ENCODE measurements at regions of chr2 and their contacts with region 1.

Region 1: GRCh38 chr2:173101687-173102086 is 26.0 kb downstream of the MAP3K20 start:
- DNase-seq: no peak
- ATAC-seq: peak; percentile 62 to 94 (median 90)
- H3K4me3 ChIP-seq: no peak overlapping the region
- H3K27ac ChIP-seq: peak overlapping the region; percentile 48
- H3K4me1 ChIP-seq: peaks cover 93% of the 10 kb centered on the region
- H3K27me3 ChIP-seq: no peaks in the 10 kb centered on the region
- CTCF ChIP-seq: no peak

Region 2: DNA sequence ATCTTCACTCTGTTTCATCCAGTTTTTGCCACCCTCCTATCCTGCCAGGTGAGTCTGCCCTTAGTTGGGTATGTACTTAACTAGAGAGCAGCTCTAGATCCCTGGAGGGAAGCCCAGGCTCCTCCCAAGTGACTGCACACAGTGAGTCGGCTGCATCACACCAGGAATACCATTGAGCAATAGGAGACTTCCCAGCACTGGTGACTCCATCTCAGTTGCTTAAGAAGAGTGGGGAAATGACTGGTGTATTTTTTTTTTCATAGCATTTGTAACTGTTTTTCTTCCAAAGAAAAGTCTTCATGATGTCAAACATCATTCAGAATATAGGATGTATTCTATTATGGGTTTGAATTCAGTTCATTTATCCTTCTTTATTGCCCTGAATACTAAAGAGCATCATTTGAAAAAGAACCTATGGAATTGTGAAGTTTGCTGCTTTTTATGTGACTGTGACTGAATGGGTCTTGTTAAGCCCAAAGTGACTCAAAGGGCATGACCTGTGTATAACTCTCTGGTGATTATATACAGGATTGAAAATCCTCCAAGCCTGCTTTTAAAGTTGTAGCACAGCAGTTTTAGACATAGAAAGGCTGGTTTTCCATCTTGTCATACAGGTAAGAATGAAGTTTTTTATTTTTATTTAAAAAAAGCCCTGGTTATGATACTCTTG is 58.2 kb after region 1 on chr2:
- intact Hi-C with region 1: loop called in 1 of 2 experiments (anchors 10 kb)
- DNase-seq: peak; percentile 90 to 94
- ATAC-seq: peak; percentile 96 to 99 (median 98)
- H3K4me3 ChIP-seq: peak overlapping the region; percentile 39
- H3K27ac ChIP-seq: peak overlapping the region; percentile 83
- H3K4me1 ChIP-seq: peaks cover 64% of the 10 kb centered on the region
- H3K27me3 ChIP-seq: no peaks in the 10 kb centered on the region
- CTCF ChIP-seq: no peak

Measured in psoas muscle (tissue), 8 donors.